ENCODE measurements at regions of chr10 and their contacts with region 1.

Region 1: DNA sequence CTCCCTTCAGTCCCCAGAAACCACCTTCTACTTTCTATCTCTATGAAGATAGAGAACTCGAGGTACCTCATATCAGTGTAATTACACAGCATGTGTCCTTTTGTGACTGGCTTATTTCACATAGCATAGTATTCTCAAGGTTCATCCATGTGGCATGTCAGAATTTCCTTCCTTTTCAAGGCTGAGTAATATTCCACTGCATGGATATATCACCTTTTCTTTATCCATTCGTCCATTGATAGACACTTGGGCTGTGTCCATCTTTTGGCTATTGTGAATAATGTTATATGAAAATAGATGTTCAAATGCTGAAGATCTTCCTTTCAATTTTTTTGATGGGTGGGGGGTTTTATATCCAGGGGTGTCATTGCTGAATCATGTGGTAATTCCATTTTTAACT is 91.8 kb upstream of the CCNY start:
- DNase-seq: no peak

Region 2: DNA sequence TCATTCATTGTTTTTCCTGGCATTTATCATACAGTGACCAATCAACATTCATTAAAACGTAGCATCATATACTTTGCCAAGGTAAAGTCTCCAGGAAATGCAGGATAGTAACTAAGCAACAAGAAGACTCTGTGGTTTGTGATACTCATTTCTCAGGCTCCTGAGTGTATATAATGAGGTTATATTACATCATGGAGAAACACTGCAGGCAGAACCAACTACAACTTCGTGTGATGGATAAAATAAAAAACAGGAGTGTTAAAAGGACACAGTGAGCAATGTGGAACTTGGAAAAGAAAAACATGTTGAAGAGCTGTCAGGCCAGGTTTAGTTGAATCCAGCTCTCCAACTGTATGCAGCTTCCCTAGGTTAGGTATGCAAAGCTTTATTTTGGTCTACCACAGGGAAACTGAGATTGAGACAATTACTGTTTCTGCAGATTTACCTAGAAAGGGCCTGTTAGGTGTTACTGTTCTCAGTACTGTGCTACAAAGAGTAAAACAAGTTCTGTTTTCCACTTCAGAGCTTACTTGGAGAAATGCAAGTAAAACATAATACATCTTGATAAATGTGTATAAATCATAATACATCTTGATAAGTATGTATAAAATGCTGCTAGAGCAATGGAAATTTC is 84.0 kb after region 1 on chr10:
- intact Hi-C with region 1: loop called (anchors 5 kb)
- DNase-seq: no peak

Region 3: GRCh38 chr10:35470260-35470918 is 225.8 kb after region 1 on chr10:
- intact Hi-C with region 1: no loop called
- DNase-seq: no peak

Region 4: GRCh38 chr10:35600193-35600592 is 355.6 kb after region 1 on chr10:
- intact Hi-C with region 1: loop called (anchors 5 kb)
- DNase-seq: no peak

Measured in cardiac septum (tissue), 1 donor.